AG04450 (cell line): ENCODE measurements at regions of chr20 and their contacts with region 1.

Region 1: DNA sequence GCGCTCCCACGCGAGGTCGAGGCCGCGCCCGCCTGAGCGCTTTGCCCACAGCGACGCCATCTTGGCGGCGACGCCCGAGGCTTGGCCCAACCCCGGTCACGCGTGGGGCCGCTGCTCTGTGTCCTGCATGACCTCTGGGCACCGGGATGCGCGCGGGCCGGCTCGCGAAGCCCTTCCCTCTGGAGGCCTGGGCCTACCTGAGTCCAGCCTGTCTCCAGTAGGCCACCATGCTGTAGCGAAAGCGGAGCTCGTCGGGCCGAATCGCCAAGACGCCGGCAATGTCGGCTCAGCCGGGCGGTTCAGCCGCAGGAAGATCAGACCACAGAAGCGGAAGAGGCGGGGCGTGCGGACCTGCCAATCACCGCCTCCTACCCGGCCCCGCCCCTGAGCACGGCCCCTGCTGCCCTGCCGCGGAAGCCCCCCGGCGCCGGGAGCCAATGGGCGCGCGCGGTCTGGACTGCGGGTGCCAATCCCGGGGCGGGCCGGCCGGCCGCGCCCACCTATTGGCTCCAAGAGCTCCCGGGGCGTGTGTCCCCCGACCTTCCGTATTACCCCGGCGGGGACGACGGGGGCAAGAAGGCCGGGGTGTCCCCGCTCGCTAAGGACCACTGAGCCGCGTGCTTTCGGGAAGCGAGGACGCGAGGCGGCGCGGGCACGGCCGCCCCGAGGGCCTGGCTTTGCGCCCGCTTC is at the start of gene ATP5F1E:
- DNase-seq: peak; percentile 67
- H3K4me3 ChIP-seq: peak within 1 kb of the TSS; percentile 77
- H3K27ac ChIP-seq: no peak within 1 kb of the TSS
- H3K27me3 ChIP-seq: no peaks in the 10 kb centered on the region
- CTCF ChIP-seq: no peak
- polyA plus RNA-seq, gene ATP5F1E: 70.8 and 84.3 TPM in 2 replicates

Region 2: DNA sequence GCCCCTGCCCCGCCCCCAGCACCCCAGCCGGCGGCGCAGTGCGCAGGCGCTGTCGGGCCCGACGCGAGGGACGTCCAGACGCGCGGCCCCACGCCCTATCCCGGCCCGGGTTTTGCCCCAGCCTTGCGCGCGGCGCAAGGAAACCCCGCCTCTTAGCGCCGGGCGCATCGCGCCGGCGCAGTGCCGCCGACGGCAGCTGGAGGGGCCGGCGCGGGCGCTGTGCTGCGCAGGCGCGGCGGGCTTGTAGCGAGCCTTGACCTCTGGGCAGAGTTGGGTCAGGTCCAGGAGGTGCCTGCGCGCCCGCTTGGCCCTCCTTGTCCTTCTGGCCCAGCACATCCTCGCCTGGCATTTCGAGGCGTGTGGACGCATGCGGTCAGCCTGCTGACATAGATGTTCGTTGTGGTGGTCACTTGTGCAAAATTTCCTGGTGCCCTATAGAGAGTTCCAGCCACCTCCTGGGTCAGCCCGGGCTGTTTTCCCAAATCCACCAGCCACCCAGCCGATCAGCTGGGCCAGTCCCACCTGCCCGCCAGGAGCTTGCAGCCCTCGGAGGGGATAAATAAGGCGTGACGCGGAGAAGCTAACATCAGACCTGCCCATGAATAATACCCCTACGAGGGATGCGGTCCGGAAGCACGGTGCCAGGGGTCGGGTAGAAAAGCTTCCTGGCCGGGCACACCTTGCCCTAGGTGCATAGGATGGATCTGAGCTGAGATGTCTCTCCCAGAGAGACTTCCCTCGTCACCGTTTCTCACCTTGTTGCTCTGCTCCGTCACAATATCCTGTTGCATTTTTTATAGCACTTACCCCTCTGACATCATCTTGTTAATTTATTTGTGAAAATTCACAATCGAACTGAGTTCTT is 10.9 kb after region 1 on chr20:
- CTCF ChIA-PET with region 1: interaction called, 3 read pairs
- POLR2A ChIA-PET with region 1: interaction called, 24 read pairs
- DNase-seq: peak; percentile 73
- H3K4me3 ChIP-seq: peak overlapping the region; percentile 84
- H3K27ac ChIP-seq: no peak overlapping the region
- H3K27me3 ChIP-seq: no peaks in the 10 kb centered on the region
- CTCF ChIP-seq: no peak